MCF 10A (cell line): ENCODE measurements at regions of chr4 and their contacts with region 1.

Region 1: GRCh38 chr4:132332932-132333722 is 816.0 kb upstream of the PCDH10 start:
- DNase-seq: peak; percentile 28
- H3K4me3 Mint-ChIP-seq: peak overlapping the region; percentile 5
- H3K27ac Mint-ChIP-seq: peak overlapping the region; percentile 8
- H3K4me1 Mint-ChIP-seq: peaks cover 21% of the 10 kb centered on the region
- H3K27me3 Mint-ChIP-seq: no peaks in the 10 kb centered on the region
- CTCF ChIP-seq: no peak

Region 2: DNA sequence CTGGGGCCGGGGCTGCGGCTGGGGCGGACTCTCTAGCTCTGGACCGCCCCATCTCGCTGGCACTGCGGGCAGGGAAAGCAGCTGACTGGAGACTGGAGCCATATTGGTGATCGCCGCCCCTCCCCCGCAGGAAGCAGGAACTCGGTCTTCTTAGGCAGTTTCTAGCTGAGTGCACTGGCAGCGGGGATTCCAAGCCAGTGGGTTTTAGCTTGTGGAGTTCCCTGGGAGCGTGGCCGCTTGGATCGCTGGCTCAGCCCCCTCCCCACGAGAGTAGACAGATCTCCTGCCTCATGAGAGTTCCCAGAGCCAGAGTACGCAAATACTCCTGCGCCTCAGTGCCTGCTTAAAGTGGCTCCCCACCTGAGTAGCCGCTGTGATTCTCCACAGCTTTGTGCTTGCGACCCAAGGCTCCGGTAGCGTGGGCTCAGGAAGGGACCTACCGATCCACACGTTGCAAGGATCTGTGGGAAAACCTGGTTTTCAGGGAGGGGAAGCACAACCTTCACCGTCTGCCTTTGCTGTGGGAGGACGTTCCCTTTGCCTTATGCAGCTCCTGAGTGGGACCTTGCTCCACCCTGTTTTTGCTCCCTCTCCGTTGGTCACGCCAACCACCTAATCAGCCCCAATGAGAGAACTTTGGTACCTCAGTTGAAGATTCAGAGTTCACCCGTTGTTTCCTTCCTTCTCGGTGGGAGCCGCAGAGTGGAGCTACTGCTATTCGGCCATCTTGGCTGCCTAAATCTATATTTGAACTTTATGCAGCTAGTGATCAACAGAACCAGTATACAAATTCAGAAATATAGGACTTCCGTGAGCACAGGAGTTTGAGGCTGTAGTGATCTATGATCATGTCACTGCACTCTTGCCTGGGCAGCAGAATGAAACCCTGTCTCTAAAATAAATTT is 12.0 kb after region 1 on chr4:
- CTCF ChIA-PET with region 1: interaction called, 10 read pairs
- POLR2A ChIA-PET with region 1: interaction called, 4 read pairs
- intact Hi-C with region 1: no loop called
- DNase-seq: no peak
- H3K4me3 Mint-ChIP-seq: no peak overlapping the region
- H3K27ac Mint-ChIP-seq: no peak overlapping the region
- H3K4me1 Mint-ChIP-seq: no peaks in the 10 kb centered on the region
- H3K27me3 Mint-ChIP-seq: no peaks in the 10 kb centered on the region
- CTCF ChIP-seq: no peak